B cell (primary cell): ENCODE measurements at regions of chr7 and their contacts with region 1.

Region 1: GRCh38 chr7:18352339-18353255 is 143.0 kb upstream of the HDAC9 start:
- DNase-seq: peak; percentile 70
- ATAC-seq: peak; percentile 52
- H3K4me3 ChIP-seq: no peak overlapping the region
- H3K4me3 Mint-ChIP-seq: no peak overlapping the region
- H3K27ac ChIP-seq: no peak overlapping the region
- H3K27ac Mint-ChIP-seq: no peak overlapping the region
- H3K4me1 ChIP-seq: peaks cover 11 to 12% of the 10 kb centered on the region in 2 donors
- H3K4me1 Mint-ChIP-seq: peaks cover 25% of the 10 kb centered on the region
- H3K27me3 ChIP-seq: no peaks in the 10 kb centered on the region
- H3K27me3 Mint-ChIP-seq: no peaks in the 10 kb centered on the region
- CTCF ChIP-seq: peak; percentile 80

Region 2: GRCh38 chr7:17680943-17681351 is 671.6 kb before region 1 on chr7:
- CTCF ChIA-PET with region 1: interaction called, 69 read pairs
- POLR2A ChIA-PET with region 1: no interaction called
- intact Hi-C with region 1: no loop called
- DNase-seq: peak; percentile 41
- ATAC-seq: no peak
- H3K4me3 ChIP-seq: no peak overlapping the region
- H3K4me3 Mint-ChIP-seq: no peak overlapping the region
- H3K27ac ChIP-seq: no peak overlapping the region
- H3K27ac Mint-ChIP-seq: no peak overlapping the region
- H3K4me1 ChIP-seq: no peaks in the 10 kb centered on the region
- H3K4me1 Mint-ChIP-seq: no peaks in the 10 kb centered on the region
- H3K27me3 ChIP-seq: no peaks in the 10 kb centered on the region
- H3K27me3 Mint-ChIP-seq: no peaks in the 10 kb centered on the region
- CTCF ChIP-seq: peak; percentile 84

Region 3: DNA sequence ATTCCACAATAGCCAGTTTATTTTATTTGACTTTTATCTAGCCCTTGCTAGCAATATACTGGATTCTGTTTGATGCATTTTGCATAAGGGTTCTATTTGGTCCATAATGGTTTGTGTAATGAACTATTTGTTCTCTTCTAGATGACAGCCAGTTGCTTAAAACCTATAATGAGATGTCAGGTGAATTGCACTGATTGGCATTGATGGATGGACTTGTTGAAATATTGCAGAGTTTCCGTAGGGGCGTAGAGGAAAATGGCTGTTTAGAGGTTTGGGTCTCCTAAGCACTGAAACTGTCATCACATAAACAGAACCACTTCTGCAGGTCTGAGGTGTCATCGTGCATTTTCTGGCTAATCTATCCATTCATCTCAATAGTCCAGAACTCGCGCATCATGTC is 18.0 kb after region 1 on chr7:
- CTCF ChIA-PET with region 1: interaction called, 22 read pairs
- POLR2A ChIA-PET with region 1: no interaction called
- intact Hi-C with region 1: no loop called
- DNase-seq: no peak
- ATAC-seq: no peak
- H3K4me3 ChIP-seq: no peak overlapping the region
- H3K4me3 Mint-ChIP-seq: no peak overlapping the region
- H3K27ac ChIP-seq: no peak overlapping the region
- H3K27ac Mint-ChIP-seq: no peak overlapping the region
- H3K4me1 ChIP-seq: no peaks in the 10 kb centered on the region
- H3K4me1 Mint-ChIP-seq: no peaks in the 10 kb centered on the region
- H3K27me3 ChIP-seq: no peaks in the 10 kb centered on the region
- H3K27me3 Mint-ChIP-seq: no peaks in the 10 kb centered on the region
- CTCF ChIP-seq: no peak

Region 4: DNA sequence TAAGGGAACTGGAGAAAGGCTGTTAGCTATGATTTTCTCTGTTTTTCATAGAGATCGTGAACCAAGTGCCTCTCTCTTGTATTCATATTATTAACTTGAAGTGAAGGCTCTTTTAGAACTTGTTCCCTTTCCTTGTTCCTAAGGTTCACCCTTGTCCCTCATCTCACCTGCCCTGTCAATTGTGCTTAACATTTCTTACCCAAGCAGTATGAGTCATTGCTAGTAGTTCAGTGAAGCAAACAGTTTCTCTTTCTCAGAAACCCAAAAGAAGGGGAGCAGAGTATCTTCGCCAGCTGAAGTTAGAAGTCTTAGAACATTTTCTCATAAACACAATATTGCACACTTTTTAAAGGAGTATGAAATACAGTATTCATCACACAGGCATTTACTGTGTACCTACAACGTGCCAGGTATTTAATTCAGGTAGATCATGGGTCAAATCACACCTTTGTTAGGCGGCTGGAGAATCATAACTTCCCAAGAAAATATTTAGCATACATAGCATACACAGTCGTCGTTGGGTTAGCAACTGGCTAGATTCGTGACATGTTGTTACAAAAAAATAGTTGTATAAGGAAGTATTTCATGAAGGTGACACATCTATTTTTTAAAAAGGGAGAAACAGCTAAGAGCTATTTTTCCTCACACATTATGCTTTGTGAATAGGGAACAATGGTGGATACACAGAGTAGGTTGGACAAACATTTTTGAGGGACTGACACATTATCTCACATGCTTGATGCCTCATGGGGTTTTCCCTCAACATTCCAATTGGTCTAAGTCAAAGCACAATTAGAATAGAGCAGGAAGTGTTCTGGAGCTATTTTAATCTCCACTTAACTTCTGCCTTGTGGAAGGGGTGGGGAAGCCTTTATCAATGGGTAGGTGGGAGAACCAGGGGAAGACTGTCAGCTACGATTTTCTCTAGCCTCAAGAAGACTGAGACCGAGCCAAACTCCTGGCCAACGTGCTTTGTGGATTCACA is 156.1 kb after region 1 on chr7:
- CTCF ChIA-PET with region 1: interaction called, 10 read pairs
- POLR2A ChIA-PET with region 1: no interaction called
- intact Hi-C with region 1: no loop called
- DNase-seq: peak; percentile 75
- ATAC-seq: peak; percentile 79
- H3K4me3 ChIP-seq: peak overlapping the region in 4 of 5 experiments; percentile 13 to 65 (median 30)
- H3K4me3 Mint-ChIP-seq: peak overlapping the region; percentile 93
- H3K27ac ChIP-seq: peak overlapping the region; percentile 91 to 96
- H3K27ac Mint-ChIP-seq: peak overlapping the region; percentile 99
- H3K4me1 ChIP-seq: peaks cover 54 to 76% of the 10 kb centered on the region in 2 donors
- H3K4me1 Mint-ChIP-seq: peaks cover 77% of the 10 kb centered on the region
- H3K27me3 ChIP-seq: no peaks in the 10 kb centered on the region
- H3K27me3 Mint-ChIP-seq: no peaks in the 10 kb centered on the region
- CTCF ChIP-seq: no peak

Region 5: DNA sequence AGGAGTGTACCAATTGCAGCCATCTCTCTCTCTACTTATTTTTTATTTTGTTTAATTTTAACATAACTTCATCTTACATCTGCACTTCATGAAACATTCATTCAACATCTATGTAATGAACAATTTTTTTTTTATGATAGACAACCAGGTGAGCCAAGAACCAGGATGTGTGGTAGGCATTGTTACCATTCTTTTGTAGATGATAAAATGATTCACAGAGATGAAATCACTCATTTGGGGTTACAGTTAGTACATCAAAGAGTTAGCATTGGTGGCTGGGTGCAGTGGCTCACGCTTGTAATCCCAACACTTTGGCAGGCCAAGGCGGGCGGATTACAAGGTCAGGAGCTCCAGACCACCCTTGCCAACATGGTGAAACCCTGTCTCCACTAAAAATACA is 270.8 kb after region 1 on chr7:
- CTCF ChIA-PET with region 1: interaction called, 10 read pairs
- POLR2A ChIA-PET with region 1: no interaction called
- intact Hi-C with region 1: no loop called
- DNase-seq: no peak
- ATAC-seq: no peak
- H3K4me3 ChIP-seq: no peak overlapping the region
- H3K4me3 Mint-ChIP-seq: no peak overlapping the region
- H3K27ac ChIP-seq: no peak overlapping the region
- H3K27ac Mint-ChIP-seq: no peak overlapping the region
- H3K4me1 ChIP-seq: no peaks in the 10 kb centered on the region
- H3K4me1 Mint-ChIP-seq: no peaks in the 10 kb centered on the region
- H3K27me3 ChIP-seq: no peaks in the 10 kb centered on the region
- H3K27me3 Mint-ChIP-seq: no peaks in the 10 kb centered on the region
- CTCF ChIP-seq: no peak

Region 6: GRCh38 chr7:19051767-19052375 is 699.3 kb after region 1 on chr7:
- CTCF ChIA-PET with region 1: interaction called, 65 read pairs
- POLR2A ChIA-PET with region 1: no interaction called
- intact Hi-C with region 1: no loop called
- DNase-seq: peak; percentile 40
- ATAC-seq: peak; percentile 69
- H3K4me3 ChIP-seq: no peak overlapping the region
- H3K4me3 Mint-ChIP-seq: no peak overlapping the region
- H3K27ac ChIP-seq: no peak overlapping the region
- H3K27ac Mint-ChIP-seq: no peak overlapping the region
- H3K4me1 ChIP-seq: no peaks in the 10 kb centered on the region
- H3K4me1 Mint-ChIP-seq: no peaks in the 10 kb centered on the region
- H3K27me3 ChIP-seq: peaks cover 0 to 2% (median 0%) of the 10 kb centered on the region in 4 experiments
- H3K27me3 Mint-ChIP-seq: peaks cover 17% of the 10 kb centered on the region
- CTCF ChIP-seq: peak; percentile 90